B cell (primary cell): ENCODE measurements at regions of chr3 and their contacts with region 1.

Region 1: DNA sequence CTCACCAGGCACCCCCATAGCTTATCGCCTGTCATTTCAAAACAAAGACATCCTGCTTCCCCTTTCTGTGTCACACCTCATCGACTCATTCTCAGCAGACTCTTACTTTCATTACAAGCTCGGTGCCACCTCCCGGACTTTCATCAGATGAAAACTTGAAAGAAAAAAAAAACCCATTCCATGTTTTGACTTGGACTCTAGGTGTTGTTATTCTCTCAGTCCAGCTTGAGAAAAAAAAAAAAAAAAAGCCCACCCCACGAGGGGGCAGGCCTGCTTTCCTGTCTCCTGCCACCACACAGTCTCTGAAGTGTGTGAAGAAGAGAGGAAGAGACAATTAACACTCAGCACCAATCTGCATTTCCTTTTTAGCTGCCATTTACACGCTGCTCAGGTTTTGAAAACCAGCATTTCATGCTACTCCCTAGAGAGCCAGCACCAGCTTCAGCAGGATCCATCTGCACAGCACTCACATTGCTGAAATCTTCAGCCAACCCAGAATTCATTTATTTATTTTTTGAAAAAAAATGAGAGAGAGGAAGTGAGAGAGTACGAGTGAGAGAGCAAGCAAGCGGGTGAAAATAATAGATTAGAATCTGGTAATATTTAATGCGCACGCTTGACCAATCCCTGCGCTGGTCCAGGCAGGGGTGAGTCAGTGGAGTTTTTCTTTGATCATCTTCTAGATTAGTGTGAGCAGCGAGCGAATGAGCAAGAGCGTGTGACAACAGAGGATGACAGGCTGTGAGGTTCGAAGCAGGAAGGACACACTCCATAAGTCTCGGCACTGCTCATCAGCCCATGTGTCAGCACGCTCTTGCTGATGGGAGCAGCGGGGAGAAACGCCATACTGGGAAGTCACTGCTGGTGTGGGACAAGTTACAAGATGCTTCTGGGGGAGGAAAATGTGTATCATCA is 23.5 kb downstream of the ZNF80 start:
- DNase-seq: peak; percentile 92
- ATAC-seq: peak; percentile 76
- H3K4me3 ChIP-seq: peak overlapping the region; percentile 42 to 76 (median 69)
- H3K4me3 Mint-ChIP-seq: no peak overlapping the region
- H3K27ac ChIP-seq: peak overlapping the region; percentile 95 to 98
- H3K27ac Mint-ChIP-seq: no peak overlapping the region
- H3K4me1 ChIP-seq: peaks cover 66 to 71% of the 10 kb centered on the region in 2 donors
- H3K4me1 Mint-ChIP-seq: peaks cover 28% of the 10 kb centered on the region
- H3K27me3 ChIP-seq: no peaks in the 10 kb centered on the region
- H3K27me3 Mint-ChIP-seq: no peaks in the 10 kb centered on the region
- CTCF ChIP-seq: no peak

Region 2: GRCh38 chr3:113585720-113586119 is 628.2 kb before region 1 on chr3:
- CTCF ChIA-PET with region 1: no interaction called
- POLR2A ChIA-PET with region 1: no interaction called
- intact Hi-C with region 1: no loop called
- DNase-seq: no peak
- ATAC-seq: no peak
- H3K4me3 ChIP-seq: no peak overlapping the region
- H3K4me3 Mint-ChIP-seq: no peak overlapping the region
- H3K27ac ChIP-seq: no peak overlapping the region
- H3K27ac Mint-ChIP-seq: no peak overlapping the region
- H3K4me1 ChIP-seq: no peaks in the 10 kb centered on the region
- H3K4me1 Mint-ChIP-seq: no peaks in the 10 kb centered on the region
- H3K27me3 ChIP-seq: no peaks in the 10 kb centered on the region
- H3K27me3 Mint-ChIP-seq: no peaks in the 10 kb centered on the region
- CTCF ChIP-seq: no peak

Region 3: DNA sequence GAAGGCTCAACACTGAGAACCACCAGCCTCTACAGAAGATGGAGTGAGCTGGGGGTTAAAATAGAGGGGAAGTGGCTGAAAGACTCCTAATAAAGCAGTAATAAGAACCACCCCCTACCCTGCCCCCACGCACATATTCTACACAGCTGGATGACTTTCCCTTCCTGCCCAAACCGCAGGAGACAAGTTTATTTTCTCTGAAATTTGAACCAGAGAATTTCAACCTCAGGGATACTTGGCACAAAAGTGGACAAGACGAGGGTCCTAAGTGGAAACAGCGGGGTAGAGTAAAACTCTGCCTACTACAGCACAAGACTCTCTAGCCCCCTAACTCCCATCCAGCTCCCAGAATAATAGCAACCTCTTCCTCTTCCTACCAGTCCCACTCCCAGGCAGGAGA is 545.9 kb before region 1 on chr3:
- CTCF ChIA-PET with region 1: no interaction called
- POLR2A ChIA-PET with region 1: no interaction called
- intact Hi-C with region 1: no loop called
- DNase-seq: no peak
- ATAC-seq: peak; percentile 43
- H3K4me3 ChIP-seq: peak overlapping the region in 1 of 5 experiments; percentile 12
- H3K4me3 Mint-ChIP-seq: peak overlapping the region; percentile 60
- H3K27ac ChIP-seq: peak overlapping the region; percentile 38 to 74
- H3K27ac Mint-ChIP-seq: peak overlapping the region; percentile 91
- H3K4me1 ChIP-seq: peaks cover 33 to 39% of the 10 kb centered on the region in 2 donors
- H3K4me1 Mint-ChIP-seq: peaks cover 44% of the 10 kb centered on the region
- H3K27me3 ChIP-seq: no peaks in the 10 kb centered on the region
- H3K27me3 Mint-ChIP-seq: no peaks in the 10 kb centered on the region
- CTCF ChIP-seq: no peak

Region 4: DNA sequence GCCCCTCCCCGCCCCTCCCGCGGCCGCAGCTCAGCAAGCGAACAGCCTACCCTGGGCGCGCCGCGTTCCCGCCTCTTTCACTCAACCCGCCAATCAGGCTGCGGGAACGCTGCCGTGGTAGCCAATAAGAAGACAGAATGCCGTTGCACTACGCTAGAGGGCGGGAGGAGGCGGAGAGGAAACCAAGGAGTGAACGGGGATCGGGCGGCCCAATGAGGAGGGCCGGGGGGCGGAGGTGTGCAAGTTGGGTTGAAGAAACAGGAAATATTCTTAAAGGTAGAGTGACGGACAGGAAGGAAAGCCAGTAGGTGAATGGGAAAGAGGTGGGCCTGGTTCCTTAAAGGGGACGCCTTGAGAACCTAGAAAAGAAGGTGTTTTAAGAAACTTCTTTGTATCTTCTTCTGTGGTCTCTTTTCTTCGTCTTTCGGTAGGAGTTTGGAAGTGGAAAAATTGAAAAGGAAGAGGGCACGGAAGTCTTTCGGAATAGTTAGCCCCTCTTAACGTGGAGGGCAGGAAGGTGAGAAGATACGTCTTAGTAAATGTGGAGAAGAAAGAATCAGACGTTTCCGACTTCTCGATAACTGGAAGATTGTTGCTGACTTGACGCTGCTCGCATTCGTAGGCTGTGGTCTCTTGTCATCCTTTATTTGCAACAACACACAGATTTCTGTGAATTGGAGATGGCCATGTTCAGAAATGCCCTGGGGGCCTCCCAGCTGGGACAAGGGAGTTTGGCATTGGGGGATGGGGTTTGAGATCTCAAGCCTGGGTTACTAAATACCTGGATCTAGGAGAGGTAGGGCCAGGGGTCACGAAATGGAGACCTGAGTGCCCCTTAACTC is 517.0 kb before region 1 on chr3:
- CTCF ChIA-PET with region 1: no interaction called
- POLR2A ChIA-PET with region 1: interaction called, 6 read pairs
- intact Hi-C with region 1: loop called (anchors 2 kb)
- DNase-seq: peak; percentile 100
- ATAC-seq: peak; percentile 87
- H3K4me3 ChIP-seq: peak overlapping the region; percentile 73 to 100 (median 90)
- H3K4me3 Mint-ChIP-seq: no peak overlapping the region
- H3K27ac ChIP-seq: peak overlapping the region; percentile 81 to 90
- H3K27ac Mint-ChIP-seq: no peak overlapping the region
- H3K4me1 ChIP-seq: peaks cover 39 to 40% of the 10 kb centered on the region in 2 donors
- H3K4me1 Mint-ChIP-seq: peaks cover 27% of the 10 kb centered on the region
- H3K27me3 ChIP-seq: no peaks in the 10 kb centered on the region
- H3K27me3 Mint-ChIP-seq: no peaks in the 10 kb centered on the region
- CTCF ChIP-seq: no peak

Region 5: GRCh38 chr3:113852506-113852905 is 361.4 kb before region 1 on chr3:
- CTCF ChIA-PET with region 1: no interaction called
- POLR2A ChIA-PET with region 1: no interaction called
- intact Hi-C with region 1: no loop called
- DNase-seq: no peak
- ATAC-seq: no peak
- H3K4me3 ChIP-seq: no peak overlapping the region
- H3K4me3 Mint-ChIP-seq: no peak overlapping the region
- H3K27ac ChIP-seq: no peak overlapping the region
- H3K27ac Mint-ChIP-seq: no peak overlapping the region
- H3K4me1 ChIP-seq: no peaks in the 10 kb centered on the region
- H3K4me1 Mint-ChIP-seq: no peaks in the 10 kb centered on the region
- H3K27me3 ChIP-seq: no peaks in the 10 kb centered on the region
- H3K27me3 Mint-ChIP-seq: no peaks in the 10 kb centered on the region
- CTCF ChIP-seq: no peak

Region 6: GRCh38 chr3:113947372-113948014 is 266.4 kb before region 1 on chr3 and contains the start of gene ZDHHC23:
- CTCF ChIA-PET with region 1: no interaction called
- POLR2A ChIA-PET with region 1: no interaction called
- intact Hi-C with region 1: loop called (anchors 5 kb)
- DNase-seq: peak; percentile 88
- ATAC-seq: peak; percentile 84
- H3K4me3 ChIP-seq: peak within 1 kb of the TSS; percentile 47 to 89 (median 84)
- H3K4me3 Mint-ChIP-seq: peak within 1 kb of the TSS; percentile 87
- H3K27ac ChIP-seq: peak within 1 kb of the TSS; percentile 48 to 74
- H3K27ac Mint-ChIP-seq: peak within 1 kb of the TSS; percentile 89
- H3K4me1 ChIP-seq: peaks cover 12 to 14% of the 10 kb centered on the region in 2 donors
- H3K4me1 Mint-ChIP-seq: peaks cover 18% of the 10 kb centered on the region
- H3K27me3 ChIP-seq: no peaks in the 10 kb centered on the region
- H3K27me3 Mint-ChIP-seq: no peaks in the 10 kb centered on the region
- CTCF ChIP-seq: no peak
- total RNA-seq, gene ZDHHC23: 72.6 and 75.1 TPM in 2 replicates

Region 7: DNA sequence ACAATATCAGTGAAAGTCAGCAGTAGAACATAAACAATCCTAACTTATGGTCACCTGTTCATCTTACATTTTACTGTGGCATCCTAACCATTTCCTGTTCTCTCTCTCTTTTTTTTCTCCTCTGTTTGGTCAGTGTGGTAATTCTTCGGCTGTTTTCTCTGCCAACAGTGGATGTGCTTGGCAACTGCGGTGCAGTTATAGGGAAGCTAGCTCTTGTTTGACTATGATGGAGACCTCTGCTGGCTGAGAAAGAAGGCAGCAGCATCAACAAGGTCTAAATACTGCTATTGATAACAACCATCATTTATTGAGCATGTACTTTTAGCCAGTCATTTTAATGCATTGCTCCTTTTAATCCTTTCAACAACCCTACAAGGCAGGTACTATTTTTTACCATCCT is 34.3 kb before region 1 on chr3:
- CTCF ChIA-PET with region 1: interaction called, 13 read pairs
- POLR2A ChIA-PET with region 1: interaction called, 4 read pairs
- intact Hi-C with region 1: no loop called
- DNase-seq: peak; percentile 46
- ATAC-seq: peak; percentile 65
- H3K4me3 ChIP-seq: no peak overlapping the region
- H3K4me3 Mint-ChIP-seq: no peak overlapping the region
- H3K27ac ChIP-seq: no peak overlapping the region
- H3K27ac Mint-ChIP-seq: no peak overlapping the region
- H3K4me1 ChIP-seq: no peaks in the 10 kb centered on the region
- H3K4me1 Mint-ChIP-seq: peaks cover 2% of the 10 kb centered on the region
- H3K27me3 ChIP-seq: peaks cover 0 to 2% (median 0%) of the 10 kb centered on the region in 4 experiments
- H3K27me3 Mint-ChIP-seq: peaks cover 23% of the 10 kb centered on the region
- CTCF ChIP-seq: peak; percentile 40

Region 8: GRCh38 chr3:114274929-114275328 is 61.0 kb after region 1 on chr3:
- CTCF ChIA-PET with region 1: no interaction called
- POLR2A ChIA-PET with region 1: no interaction called
- intact Hi-C with region 1: no loop called
- DNase-seq: no peak
- ATAC-seq: no peak
- H3K4me3 ChIP-seq: no peak overlapping the region
- H3K4me3 Mint-ChIP-seq: no peak overlapping the region
- H3K27ac ChIP-seq: no peak overlapping the region
- H3K27ac Mint-ChIP-seq: no peak overlapping the region
- H3K4me1 ChIP-seq: no peaks in the 10 kb centered on the region
- H3K4me1 Mint-ChIP-seq: no peaks in the 10 kb centered on the region
- H3K27me3 ChIP-seq: no peaks in the 10 kb centered on the region
- H3K27me3 Mint-ChIP-seq: no peaks in the 10 kb centered on the region
- CTCF ChIP-seq: no peak

Region 9: DNA sequence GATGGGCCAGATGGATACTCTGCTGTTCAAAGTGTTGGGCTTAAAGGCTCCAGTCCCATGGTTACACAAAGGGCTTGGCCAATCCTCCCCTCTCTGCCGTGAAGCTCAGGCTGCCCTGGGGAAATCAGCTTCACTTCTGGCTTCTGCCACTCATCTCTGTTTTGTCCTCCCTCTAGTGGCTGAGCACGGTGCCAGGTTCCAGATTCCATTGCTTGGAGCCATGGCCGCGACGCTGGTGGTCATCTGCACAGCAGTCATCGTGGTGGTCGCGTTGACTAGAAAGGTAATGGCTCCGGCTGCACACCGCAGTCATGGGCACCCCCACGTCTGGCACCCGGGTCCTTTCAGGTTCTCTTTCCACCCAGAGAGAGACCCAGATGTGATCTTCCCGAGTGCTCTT is 85.5 kb after region 1 on chr3:
- CTCF ChIA-PET with region 1: interaction called, 28 read pairs
- POLR2A ChIA-PET with region 1: no interaction called
- intact Hi-C with region 1: no loop called
- DNase-seq: peak; percentile 42
- ATAC-seq: peak; percentile 62
- H3K4me3 ChIP-seq: no peak overlapping the region
- H3K4me3 Mint-ChIP-seq: no peak overlapping the region
- H3K27ac ChIP-seq: no peak overlapping the region
- H3K27ac Mint-ChIP-seq: peak overlapping the region; percentile 10
- H3K4me1 ChIP-seq: peaks cover 11 to 12% of the 10 kb centered on the region in 2 donors
- H3K4me1 Mint-ChIP-seq: peaks cover 20% of the 10 kb centered on the region
- H3K27me3 ChIP-seq: no peaks in the 10 kb centered on the region
- H3K27me3 Mint-ChIP-seq: no peaks in the 10 kb centered on the region
- CTCF ChIP-seq: peak; percentile 43